Breast epithelium (tissue), 4 donors: ENCODE measurements at regions of chr1 and their contacts with region 1.

Region 1: GRCh38 chr1:196078691-196079090 is 529.5 kb downstream of the KCNT2 start:
- DNase-seq: no peak
- H3K4me3 ChIP-seq: no peak overlapping the region
- H3K27ac ChIP-seq: no peak overlapping the region
- H3K4me1 ChIP-seq: no peaks in the 10 kb centered on the region
- H3K27me3 ChIP-seq: no peaks in the 10 kb centered on the region
- CTCF ChIP-seq: no peak
- POLR2A ChIP-seq: no peak

Region 2: GRCh38 chr1:195981448-195982139 is 97.1 kb before region 1 on chr1:
- intact Hi-C with region 1: no loop called
- DNase-seq: no peak
- H3K4me3 ChIP-seq: no peak overlapping the region
- H3K27ac ChIP-seq: no peak overlapping the region
- H3K4me1 ChIP-seq: no peaks in the 10 kb centered on the region
- H3K27me3 ChIP-seq: no peaks in the 10 kb centered on the region
- CTCF ChIP-seq: no peak
- POLR2A ChIP-seq: no peak

Region 3: DNA sequence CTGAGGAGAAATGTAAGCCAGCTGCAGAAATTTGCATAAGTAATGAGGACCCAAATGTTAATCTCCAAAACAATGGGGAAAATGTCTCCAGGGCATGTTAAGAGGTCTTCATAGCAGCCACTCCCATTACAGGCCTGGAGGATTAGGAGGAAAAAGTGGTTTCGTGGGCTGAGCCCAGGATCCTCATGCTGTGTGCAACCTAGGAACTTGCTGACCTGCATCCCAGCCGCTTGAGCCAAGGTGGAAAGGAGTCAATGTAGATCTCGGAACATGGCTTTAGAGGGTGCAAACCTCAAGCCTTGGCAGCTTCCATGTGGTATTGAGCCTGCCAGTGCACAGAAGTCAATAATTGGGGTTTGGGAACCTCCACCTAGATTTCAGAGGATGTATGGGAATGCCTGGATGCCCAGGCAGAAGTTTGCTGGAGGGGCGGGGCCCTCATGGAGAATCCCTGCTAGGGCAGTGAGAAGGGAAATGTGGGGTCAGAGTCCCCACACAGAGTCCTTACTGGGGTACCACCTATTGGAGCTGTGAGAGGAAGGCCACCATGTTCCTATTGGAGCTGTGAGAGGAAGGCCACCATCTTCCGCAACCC is 1002.6 kb after region 1 on chr1:
- intact Hi-C with region 1: loop called (anchors 5 kb)
- DNase-seq: no peak
- H3K4me3 ChIP-seq: no peak overlapping the region
- H3K27ac ChIP-seq: no peak overlapping the region
- H3K4me1 ChIP-seq: no peaks in the 10 kb centered on the region
- H3K27me3 ChIP-seq: no peaks in the 10 kb centered on the region
- CTCF ChIP-seq: no peak
- POLR2A ChIP-seq: no peak